GM23248 (cell line): ENCODE measurements at regions of chr3 and their contacts with region 1.

Region 1: GRCh38 chr3:16290007-16290826 is 25.2 kb downstream of the OXNAD1 start:
- DNase-seq: peak; percentile 77
- H3K4me3 ChIP-seq: no peak overlapping the region
- H3K27ac ChIP-seq: no peak overlapping the region
- H3K4me1 ChIP-seq: peaks cover 24% of the 10 kb centered on the region
- H3K27me3 ChIP-seq: no peaks in the 10 kb centered on the region

Region 2: DNA sequence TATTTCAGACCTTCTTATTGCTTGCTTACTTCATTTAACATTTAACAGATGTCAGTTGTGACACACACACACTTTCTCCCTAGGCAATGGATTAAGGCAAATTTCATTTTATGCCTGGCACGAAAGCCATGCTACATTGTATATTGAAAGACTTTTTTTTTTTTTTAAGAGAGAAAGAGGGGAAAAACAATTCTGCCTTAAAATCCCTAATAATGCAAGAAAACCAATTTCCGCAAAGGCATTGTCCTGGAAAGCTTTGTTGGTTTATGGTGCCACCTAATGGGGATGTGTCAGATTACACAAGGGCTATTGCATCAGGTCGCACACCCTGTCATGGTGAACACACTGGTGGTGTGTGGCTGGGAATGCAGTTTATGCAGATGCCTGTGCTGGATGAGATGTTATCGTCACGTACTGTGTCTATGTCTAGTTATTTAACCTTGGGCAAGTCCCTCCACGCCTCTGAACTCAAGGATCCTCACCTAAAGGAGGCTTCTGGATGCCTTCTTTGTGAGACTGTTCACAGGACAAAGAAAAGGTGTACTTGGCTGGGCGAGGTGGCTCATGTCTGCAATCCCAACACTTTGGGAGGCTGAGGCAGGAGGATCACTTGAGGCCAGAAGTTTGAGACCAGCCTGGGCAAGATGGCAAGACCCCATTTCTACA is 260.6 kb after region 1 on chr3:
- in situ Hi-C with region 1: loop called (anchors 10 kb)
- DNase-seq: peak; percentile 91
- H3K4me3 ChIP-seq: peak overlapping the region; percentile 55
- H3K27ac ChIP-seq: no peak overlapping the region
- H3K4me1 ChIP-seq: peaks cover 14% of the 10 kb centered on the region
- H3K27me3 ChIP-seq: no peaks in the 10 kb centered on the region

Region 3: GRCh38 chr3:17032407-17033034 is 742.3 kb after region 1 on chr3:
- in situ Hi-C with region 1: loop called (anchors 25 kb)
- DNase-seq: peak; percentile 52
- H3K4me3 ChIP-seq: no peak overlapping the region
- H3K27ac ChIP-seq: no peak overlapping the region
- H3K4me1 ChIP-seq: peaks cover 18% of the 10 kb centered on the region
- H3K27me3 ChIP-seq: no peaks in the 10 kb centered on the region

Region 4: DNA sequence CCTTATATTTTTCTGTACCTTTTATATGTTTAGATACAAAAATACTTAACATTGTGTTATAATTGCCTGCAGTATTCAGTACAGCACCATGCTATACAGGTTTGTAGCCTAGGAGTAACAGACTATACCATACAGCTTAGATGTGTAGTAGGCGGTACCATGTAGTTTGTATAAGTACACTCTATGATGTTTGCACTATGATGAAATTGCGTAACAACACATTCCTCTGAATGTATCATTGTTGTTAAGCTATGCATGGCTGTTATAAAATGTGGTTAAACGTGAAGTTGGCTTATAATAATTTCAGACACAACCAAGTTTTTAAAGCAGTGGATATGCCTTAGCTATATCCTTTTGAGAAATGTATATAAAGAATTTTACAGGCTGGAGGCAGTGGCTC is 922.9 kb after region 1 on chr3:
- in situ Hi-C with region 1: loop called (anchors 25 kb)
- DNase-seq: peak; percentile 15
- H3K4me3 ChIP-seq: no peak overlapping the region
- H3K27ac ChIP-seq: no peak overlapping the region
- H3K4me1 ChIP-seq: no peaks in the 10 kb centered on the region
- H3K27me3 ChIP-seq: no peaks in the 10 kb centered on the region